ENCODE measurements at regions of chr11 and their contacts with region 1.

Region 1: DNA sequence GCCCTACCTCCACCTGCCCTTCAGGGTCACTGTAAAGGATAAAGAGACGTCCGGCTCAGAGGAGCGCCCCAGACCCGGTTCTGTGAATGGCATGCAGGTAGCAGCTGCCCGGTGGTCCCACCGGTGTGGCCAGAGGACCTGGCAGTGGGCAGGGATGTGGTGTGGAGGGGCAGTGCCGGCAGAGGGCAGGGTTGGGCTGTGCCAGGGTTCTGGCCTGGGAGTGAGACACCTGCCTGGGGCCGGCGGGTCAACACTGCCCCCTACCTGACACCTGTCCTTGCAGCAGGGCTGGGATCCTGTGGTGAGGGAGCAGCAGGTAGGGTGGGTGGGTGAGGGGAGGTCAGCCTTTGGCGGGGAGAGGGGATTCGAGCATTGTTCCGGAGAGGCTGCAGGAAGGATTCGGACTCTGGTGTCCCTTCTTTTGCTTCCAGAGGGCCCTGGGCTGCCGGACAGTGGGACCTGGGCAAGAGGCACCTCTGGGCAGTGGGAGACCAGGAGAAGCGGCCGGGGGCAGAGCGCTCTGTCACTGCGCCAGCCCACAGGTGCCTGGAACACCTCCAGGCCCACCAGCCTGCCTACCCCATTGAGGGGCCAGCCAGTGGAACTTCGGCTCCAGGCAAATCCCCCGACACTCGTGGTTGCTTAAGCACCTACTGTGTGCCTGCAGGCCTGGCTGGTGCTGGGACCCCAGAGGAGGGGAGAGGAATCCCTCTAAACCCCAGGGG is 1.6 kb upstream of the PHLDA2 start:
- DNase-seq: peak; percentile 86 to 90
- ATAC-seq: peak; percentile 45 to 78
- H3K4me3 ChIP-seq: peak overlapping the region; percentile 67
- H3K27ac ChIP-seq: peak overlapping the region; percentile 92 to 94
- H3K4me1 ChIP-seq: peaks cover 29% of the 10 kb centered on the region
- CTCF ChIP-seq: peak; percentile 98
- EP300 ChIP-seq: no peak
- POLR2A ChIP-seq: no peak
- RAD21 ChIP-seq: peak; percentile 94 to 96

Region 2: DNA sequence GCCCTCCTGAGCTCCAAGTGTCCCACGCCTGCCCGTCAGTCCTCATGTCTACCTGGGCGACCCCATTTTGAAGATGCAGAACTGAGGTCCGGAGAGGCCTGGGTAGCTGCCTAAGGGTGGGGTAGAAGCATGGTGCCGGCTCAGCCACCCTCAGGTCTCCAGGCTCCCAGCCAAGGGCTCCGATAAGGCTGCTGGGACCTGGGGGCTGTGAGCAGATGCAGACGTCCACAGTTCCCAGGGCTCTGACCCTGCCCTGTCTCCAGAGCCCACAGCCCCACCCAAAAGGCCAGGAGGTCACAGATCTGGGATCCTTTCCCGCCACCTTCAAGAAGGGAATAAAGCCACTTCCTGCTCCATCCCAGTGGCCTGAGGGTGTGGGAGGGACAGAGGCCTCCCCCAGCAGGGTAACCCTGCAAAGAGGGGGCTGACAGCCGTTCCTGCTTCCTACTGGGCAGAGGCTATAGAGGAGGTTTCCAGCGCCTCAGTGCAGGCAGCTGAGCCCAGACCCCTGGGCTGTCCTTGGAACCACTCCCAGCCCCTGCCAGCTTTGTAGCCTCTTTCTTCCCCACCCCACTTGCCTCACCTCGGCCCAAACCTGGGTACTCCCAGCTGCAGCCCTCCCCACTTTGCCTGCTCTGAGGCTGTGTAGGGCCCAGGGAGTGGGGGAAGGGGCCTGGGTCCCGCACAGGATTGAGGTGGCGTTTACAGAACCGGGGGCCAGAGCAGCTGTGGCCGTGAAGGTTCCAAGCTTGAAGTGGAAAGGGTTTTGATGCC is 130.8 kb before region 1 on chr11:
- CTCF ChIA-PET with region 1: no interaction called
- POLR2A ChIA-PET with region 1: no interaction called
- DNase-seq: no peak
- ATAC-seq: no peak
- H3K4me3 ChIP-seq: no peak overlapping the region
- H3K27ac ChIP-seq: no peak overlapping the region
- H3K4me1 ChIP-seq: no peaks in the 10 kb centered on the region
- CTCF ChIP-seq: no peak
- EP300 ChIP-seq: no peak
- POLR2A ChIP-seq: no peak
- RAD21 ChIP-seq: no peak

Region 3: GRCh38 chr11:2870460-2870859 is 60.4 kb before region 1 on chr11:
- CTCF ChIA-PET with region 1: no interaction called
- POLR2A ChIA-PET with region 1: no interaction called
- DNase-seq: no peak
- ATAC-seq: peak; percentile 69 to 83; a peak in 5 of 6 replicates
- H3K4me3 ChIP-seq: no peak overlapping the region
- H3K27ac ChIP-seq: no peak overlapping the region
- H3K4me1 ChIP-seq: no peaks in the 10 kb centered on the region
- CTCF ChIP-seq: no peak
- EP300 ChIP-seq: no peak
- POLR2A ChIP-seq: no peak
- RAD21 ChIP-seq: no peak

Region 4: GRCh38 chr11:2885676-2886081 is 45.2 kb before region 1 on chr11 and contains the start of gene CDKN1C:
- CTCF ChIA-PET with region 1: interaction called, 57 read pairs
- POLR2A ChIA-PET with region 1: interaction called, 8 read pairs
- DNase-seq: peak; percentile 71 to 78
- ATAC-seq: peak; percentile 57 to 74
- H3K4me3 ChIP-seq: peak within 1 kb of the TSS; percentile 71
- H3K27ac ChIP-seq: peak within 1 kb of the TSS; percentile 66 to 82; a peak in 5 of 6 replicates
- H3K4me1 ChIP-seq: peaks cover 5% of the 10 kb centered on the region; the same call in 1 of the 3 replicates
- CTCF ChIP-seq: no peak
- EP300 ChIP-seq: no peak
- POLR2A ChIP-seq: peak; percentile 40
- RAD21 ChIP-seq: no peak
- polyA plus RNA-seq, gene CDKN1C: 0.40 and 0.41 TPM in 2 replicates

Region 5: GRCh38 chr11:2901854-2902783 is 28.7 kb before region 1 on chr11:
- CTCF ChIA-PET with region 1: interaction called, 60 read pairs
- POLR2A ChIA-PET with region 1: interaction called, 74 read pairs
- DNase-seq: peak; percentile 94 to 95
- ATAC-seq: peak; percentile 69 to 88
- H3K4me3 ChIP-seq: peak overlapping the region; percentile 90
- H3K27ac ChIP-seq: peak overlapping the region; percentile 97 to 98
- H3K4me1 ChIP-seq: peaks cover 38% of the 10 kb centered on the region
- CTCF ChIP-seq: no peak
- EP300 ChIP-seq: no peak
- POLR2A ChIP-seq: peak; percentile 37
- RAD21 ChIP-seq: no peak

Region 6: GRCh38 chr11:2945031-2945756 is 14.3 kb after region 1 on chr11:
- CTCF ChIA-PET with region 1: interaction called, 74 read pairs
- POLR2A ChIA-PET with region 1: interaction called, 16 read pairs
- DNase-seq: no peak
- ATAC-seq: no peak
- H3K4me3 ChIP-seq: no peak overlapping the region
- H3K27ac ChIP-seq: no peak overlapping the region
- H3K4me1 ChIP-seq: peaks cover 19% of the 10 kb centered on the region
- CTCF ChIP-seq: no peak
- EP300 ChIP-seq: no peak
- POLR2A ChIP-seq: no peak
- RAD21 ChIP-seq: no peak

Region 7: GRCh38 chr11:2992234-2992996 is 61.5 kb after region 1 on chr11 and contains the start of gene NAP1L4:
- CTCF ChIA-PET with region 1: interaction called, 7 read pairs
- POLR2A ChIA-PET with region 1: interaction called, 11 read pairs
- DNase-seq: peak; percentile 98 to 100
- ATAC-seq: peak; percentile 90 to 93
- H3K4me3 ChIP-seq: peak within 1 kb of the TSS; percentile 68
- H3K27ac ChIP-seq: peak within 1 kb of the TSS; percentile 95 to 99
- H3K4me1 ChIP-seq: peaks cover 32% of the 10 kb centered on the region
- CTCF ChIP-seq: no peak
- EP300 ChIP-seq: no peak
- POLR2A ChIP-seq: peak; percentile 70
- RAD21 ChIP-seq: no peak
- polyA plus RNA-seq, gene NAP1L4: 128 and 148 TPM in 2 replicates

Region 8: DNA sequence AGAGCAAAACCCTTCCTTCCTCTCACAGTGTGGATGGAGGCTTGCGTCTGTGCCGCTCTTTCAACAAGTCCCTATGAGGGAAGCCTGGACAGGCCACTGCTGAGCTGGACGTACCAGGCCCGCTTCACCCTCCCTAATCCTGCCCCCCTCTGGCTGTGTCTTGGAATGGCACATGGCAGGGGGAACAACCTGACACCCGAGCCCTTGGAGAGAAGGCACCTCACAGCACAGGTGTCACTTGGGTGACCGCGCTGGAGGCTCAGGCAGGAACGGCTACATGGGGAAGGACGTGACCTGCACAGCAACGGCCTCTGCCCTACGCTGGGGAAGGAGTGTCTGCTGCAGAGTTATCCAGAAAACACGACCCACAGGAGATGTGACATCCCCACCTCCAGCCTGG is 115.3 kb after region 1 on chr11:
- CTCF ChIA-PET with region 1: no interaction called
- POLR2A ChIA-PET with region 1: no interaction called
- DNase-seq: peak in 1 of 2 experiments; percentile 25
- ATAC-seq: peak in 1 of 2 experiments; percentile 31; a peak in 1 of 6 replicates
- H3K4me3 ChIP-seq: no peak overlapping the region
- H3K27ac ChIP-seq: no peak overlapping the region
- H3K4me1 ChIP-seq: peaks cover 27% of the 10 kb centered on the region
- CTCF ChIP-seq: no peak
- EP300 ChIP-seq: no peak
- POLR2A ChIP-seq: no peak
- RAD21 ChIP-seq: no peak